Endothelial cell of umbilical vein (primary cell): ENCODE measurements at regions of chr12 and their contacts with region 1.

Region 1: GRCh38 chr12:32437095-32437515 is 37.7 kb downstream of the FGD4 start:
- DNase-seq: peak; percentile 81
- H3K4me3 ChIP-seq: no peak overlapping the region
- H3K27ac ChIP-seq: peak overlapping the region; percentile 99
- H3K4me1 ChIP-seq: peaks cover 36% of the 10 kb centered on the region
- H3K27me3 ChIP-seq: no peaks in the 10 kb centered on the region
- CTCF ChIP-seq: no peak
- POLR2A ChIP-seq: no peak

Region 2: GRCh38 chr12:32399337-32400113 is 37.6 kb before region 1 on chr12 and contains the start of gene FGD4:
- CTCF ChIA-PET with region 1: interaction called, 5 read pairs
- POLR2A ChIA-PET with region 1: interaction called, 5 read pairs
- dilution Hi-C with region 1: no loop called
- intact Hi-C with region 1: loop called (anchors 1 kb)
- DNase-seq: peak; percentile 92
- H3K4me3 ChIP-seq: peak within 1 kb of the TSS; percentile 26 to 83 (median 76)
- H3K27ac ChIP-seq: peak within 1 kb of the TSS; percentile 19
- H3K4me1 ChIP-seq: peaks cover 6% of the 10 kb centered on the region
- H3K27me3 ChIP-seq: no peaks in the 10 kb centered on the region
- CTCF ChIP-seq: peak; percentile 60 to 89
- POLR2A ChIP-seq: peak; percentile 62
- total RNA-seq, gene FGD4: 44.7 and 44.8 TPM in 2 replicates

Region 3: DNA sequence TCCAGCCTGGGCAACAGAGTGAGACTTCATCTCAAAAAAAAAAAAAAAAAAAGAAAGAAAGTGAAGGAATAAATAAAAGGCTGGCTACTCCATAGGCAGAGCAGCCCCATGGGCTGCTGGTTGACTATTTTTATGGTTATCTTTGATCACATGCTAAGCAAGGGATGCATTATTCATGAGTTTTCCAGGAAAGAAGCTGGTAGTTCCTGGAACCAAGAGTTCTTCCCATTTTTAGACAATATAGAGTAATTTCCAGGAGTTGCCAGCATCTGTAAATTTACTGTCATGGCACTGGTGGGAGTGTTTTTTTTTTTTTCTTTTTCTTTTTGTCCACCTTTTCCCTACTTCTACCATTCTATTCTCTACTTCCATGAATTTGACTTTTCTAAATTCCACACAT is 13.5 kb before region 1 on chr12:
- CTCF ChIA-PET with region 1: interaction called, 3 read pairs
- POLR2A ChIA-PET with region 1: no interaction called
- dilution Hi-C with region 1: no loop called
- intact Hi-C with region 1: loop called (anchors 2 kb)
- DNase-seq: no peak
- H3K4me3 ChIP-seq: no peak overlapping the region
- H3K27ac ChIP-seq: no peak overlapping the region
- H3K4me1 ChIP-seq: peaks cover 8% of the 10 kb centered on the region
- H3K27me3 ChIP-seq: no peaks in the 10 kb centered on the region
- CTCF ChIP-seq: no peak
- POLR2A ChIP-seq: no peak

Region 4: DNA sequence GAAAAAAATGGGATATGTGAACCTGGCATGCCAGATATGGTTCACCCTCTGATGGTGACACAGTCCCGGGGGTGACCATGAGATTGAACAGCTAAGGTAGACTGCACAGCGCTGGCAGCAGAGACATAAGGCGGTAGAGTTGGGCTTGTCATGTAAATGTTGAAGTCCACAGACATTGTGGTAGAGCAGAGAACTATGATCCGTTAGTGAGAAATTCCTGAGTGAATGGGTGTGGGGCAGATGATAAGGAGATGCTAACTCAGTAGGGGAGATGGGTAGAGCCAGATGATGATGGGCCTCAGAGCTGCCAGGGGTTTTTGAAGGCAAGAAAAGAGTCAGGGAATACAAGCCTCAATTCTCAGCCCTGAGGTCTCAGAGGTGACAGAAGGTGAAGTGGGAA is 190.9 kb after region 1 on chr12:
- CTCF ChIA-PET with region 1: no interaction called
- POLR2A ChIA-PET with region 1: no interaction called
- dilution Hi-C with region 1: no loop called
- intact Hi-C with region 1: no loop called
- DNase-seq: no peak
- H3K4me3 ChIP-seq: no peak overlapping the region
- H3K27ac ChIP-seq: no peak overlapping the region
- H3K4me1 ChIP-seq: no peaks in the 10 kb centered on the region
- H3K27me3 ChIP-seq: no peaks in the 10 kb centered on the region
- CTCF ChIP-seq: no peak
- POLR2A ChIP-seq: no peak